Dorsolateral prefrontal cortex (tissue), 120 donors: ENCODE measurements at regions of chr1 and their contacts with region 1.

Region 1: GRCh38 chr1:109282952-109283747 is at the start of gene PSRC1:
- DNase-seq: peak; percentile 98 to 99 (median 99)
- H3K4me3 ChIP-seq: peak within 1 kb of the TSS; percentile 61 to 99 (median 84)
- H3K27ac ChIP-seq: peak within 1 kb of the TSS; percentile 46 to 100 (median 96)
- H3K27me3 ChIP-seq: no peaks in the 10 kb centered on the region
- CTCF ChIP-seq: peak in 53 of 56 donors; percentile 22 to 72 (median 54)
- total RNA-seq, gene PSRC1: 52.9 to 176 (median 79.2) TPM

Region 2: DNA sequence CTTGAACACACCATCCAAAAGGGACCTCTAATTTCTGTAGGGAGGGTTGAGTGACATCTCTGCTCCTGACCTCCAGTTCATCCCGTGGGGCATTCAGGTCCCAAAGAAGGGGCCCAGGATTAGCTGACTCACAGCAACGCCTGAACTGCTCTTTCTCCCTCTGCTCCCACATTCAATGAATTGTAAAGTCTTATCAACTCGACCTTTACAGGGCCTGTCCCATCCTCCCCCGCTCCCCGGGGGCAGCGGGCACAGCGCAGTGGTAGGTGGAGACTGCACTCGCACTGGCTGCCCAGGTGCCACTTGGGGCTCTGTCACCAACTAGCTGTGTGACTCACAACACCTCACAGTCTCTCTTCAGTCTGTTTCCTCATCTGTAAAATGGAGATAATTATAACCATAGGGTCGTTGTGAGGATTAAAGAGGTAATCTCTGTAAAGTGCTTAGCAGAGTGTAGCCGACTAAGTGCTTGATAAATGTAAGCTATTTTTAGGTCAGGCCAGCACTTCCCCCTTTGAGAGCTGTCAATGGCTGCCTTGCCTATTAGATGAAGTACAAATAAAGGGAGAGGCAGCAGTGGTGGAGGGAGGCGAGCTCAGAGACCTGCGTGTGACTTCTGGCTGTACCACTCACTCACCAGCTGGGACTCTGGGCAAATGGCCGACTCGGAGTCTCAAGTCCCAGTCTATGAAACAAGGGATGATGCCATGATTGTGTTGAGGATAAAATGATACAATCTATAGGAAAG is 24.3 kb after region 1 on chr1:
- intact Hi-C with region 1: loop called (anchors 1 to 2 kb)
- DNase-seq: peak in 9 of 10 donors; percentile 37 to 80 (median 78)
- H3K4me3 ChIP-seq: peak overlapping the region in 1 of 59 donors; percentile 10
- H3K27ac ChIP-seq: peak overlapping the region; percentile 84 to 100 (median 97)
- H3K27me3 ChIP-seq: no peaks in the 10 kb centered on the region
- CTCF ChIP-seq: no peak

Region 3: DNA sequence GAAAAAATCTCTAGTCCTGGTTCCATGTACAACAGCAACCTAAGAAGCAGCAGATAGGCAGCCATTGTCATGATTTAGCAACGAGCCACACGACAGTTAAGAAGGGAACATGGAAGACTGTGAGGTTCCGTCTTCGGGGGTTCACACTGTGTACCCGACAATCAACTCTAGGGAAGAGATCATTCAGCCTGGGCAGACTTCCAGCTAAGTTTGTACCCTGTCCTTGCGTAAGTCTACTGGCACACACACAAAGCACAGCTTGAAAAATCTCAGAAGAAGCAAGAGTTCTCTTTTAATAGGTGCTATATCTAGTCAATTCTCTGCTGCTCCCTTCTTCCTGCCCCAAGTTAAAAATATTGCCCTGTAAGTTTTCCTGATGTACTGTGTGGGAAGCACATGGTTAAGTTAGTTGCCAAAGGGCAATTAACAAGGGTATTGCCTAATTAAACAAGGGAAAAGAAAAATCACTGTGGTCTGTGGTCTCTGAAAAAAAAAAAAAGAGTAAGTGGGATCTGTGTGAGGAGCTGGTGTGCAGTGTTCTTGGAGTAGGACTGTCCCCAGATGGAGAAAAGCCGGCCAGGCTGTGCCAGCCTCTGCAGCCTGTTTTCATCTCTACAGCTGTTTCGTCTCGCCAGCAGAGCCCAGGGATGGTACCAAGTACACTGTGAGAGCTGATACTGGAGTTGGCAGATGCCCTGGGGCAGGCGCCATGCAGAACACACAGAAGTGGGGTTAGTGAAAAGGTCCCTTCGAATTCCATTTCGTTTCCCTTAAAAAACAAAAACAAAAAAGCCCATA is 30.0 kb after region 1 on chr1:
- intact Hi-C with region 1: loop called in 1 of 2 experiments (anchors 1 kb)
- DNase-seq: peak; percentile 37 to 95 (median 90)
- H3K4me3 ChIP-seq: peak overlapping the region in 7 of 59 donors; percentile 1 to 29 (median 17)
- H3K27ac ChIP-seq: peak overlapping the region; percentile 6 to 100 (median 97)
- H3K27me3 ChIP-seq: no peaks in the 10 kb centered on the region
- CTCF ChIP-seq: peak in 14 of 56 donors; percentile 3 to 36 (median 16)